HEK293T (cell line): ENCODE measurements at regions of chr12 and their contacts with region 1.

Region 1: GRCh38 chr12:95072900-95073697 is at the start of gene NR2C1:
- DNase-seq: peak; percentile 98

Region 2: DNA sequence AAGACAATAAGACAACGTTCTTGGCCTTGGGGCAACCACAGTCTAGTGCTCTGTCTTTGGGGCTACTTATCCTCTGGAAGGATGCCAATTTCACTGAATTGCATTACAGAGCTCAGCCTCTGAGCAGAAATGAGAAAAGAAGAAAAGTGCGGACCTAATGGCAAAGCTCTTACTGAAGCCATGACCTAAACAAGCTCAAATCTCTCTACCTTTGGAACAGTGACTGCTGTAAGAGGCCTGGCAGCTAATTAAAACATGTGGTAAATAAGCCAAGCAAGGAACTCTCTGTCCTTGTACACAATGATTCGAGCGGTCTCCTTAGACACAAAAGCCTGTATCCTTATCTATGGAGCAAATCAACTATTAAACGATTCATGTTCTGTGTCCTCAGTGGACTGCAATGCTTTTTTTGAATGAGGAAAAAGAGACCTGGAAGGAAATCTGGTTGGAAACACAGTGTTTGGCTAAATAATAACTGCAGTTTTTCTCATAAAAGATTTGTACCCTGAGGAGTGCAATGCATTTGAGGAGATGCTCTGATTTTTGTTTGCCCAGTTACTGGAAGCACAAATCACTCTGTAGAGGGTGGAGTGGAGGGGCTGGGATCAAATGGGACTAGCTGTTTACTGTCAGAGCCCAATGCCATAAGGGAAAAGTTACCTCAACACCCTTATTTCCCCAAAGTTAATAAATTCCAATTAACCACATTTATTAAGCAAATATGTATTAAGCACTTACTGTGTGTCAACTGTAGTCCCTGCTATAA is 183.5 kb before region 1 on chr12:
- CTCF ChIA-PET with region 1: interaction called, 12 read pairs
- POLR2A ChIA-PET with region 1: no interaction called
- DNase-seq: no peak

Region 3: GRCh38 chr12:95083938-95084337 is 10.8 kb after region 1 on chr12:
- CTCF ChIA-PET with region 1: interaction called, 4 read pairs
- POLR2A ChIA-PET with region 1: interaction called, 10 read pairs
- DNase-seq: peak; percentile 13